Activated B cell treated with CpG ODN at 0.5 μM for 24 hours (primary cell): ENCODE measurements at regions of chrX and their contacts with region 1.

Region 1: GRCh38 chrX:114075073-114075673 is 508.7 kb upstream of the HTR2C start:
- DNase-seq: no peak
- ATAC-seq: no peak
- H3K4me3 Mint-ChIP-seq: no peak overlapping the region
- H3K27ac Mint-ChIP-seq: no peak overlapping the region
- H3K4me1 Mint-ChIP-seq: peaks cover 11% of the 10 kb centered on the region
- H3K27me3 Mint-ChIP-seq: no peaks in the 10 kb centered on the region
- CTCF ChIP-seq: no peak

Region 2: DNA sequence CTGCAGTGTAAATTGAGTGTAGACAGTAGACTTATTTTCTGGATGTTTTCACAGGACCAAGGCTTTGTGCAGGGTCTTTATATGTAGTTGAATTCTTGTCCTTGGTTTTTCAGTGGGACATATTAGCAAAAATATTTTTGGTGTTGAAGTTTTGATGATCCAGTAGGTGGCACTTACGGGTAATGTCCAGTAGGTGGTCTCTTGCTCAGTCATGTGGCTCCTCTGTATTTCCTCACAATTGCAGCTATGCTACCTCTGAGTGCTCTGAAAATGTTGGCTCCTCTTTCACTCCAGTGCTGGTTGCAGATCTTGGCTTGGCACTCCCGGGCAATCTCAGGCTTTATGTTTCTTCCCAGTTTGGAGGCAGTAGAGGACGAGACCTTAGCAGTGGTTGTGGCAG is 814.7 kb before region 1 on chrX:
- CTCF ChIA-PET with region 1: no interaction called
- POLR2A ChIA-PET with region 1: no interaction called
- intact Hi-C with region 1: loop called (anchors 10 kb)
- DNase-seq: no peak
- ATAC-seq: no peak
- H3K4me3 Mint-ChIP-seq: no peak overlapping the region
- H3K27ac Mint-ChIP-seq: no peak overlapping the region
- H3K4me1 Mint-ChIP-seq: peaks cover 3% of the 10 kb centered on the region
- H3K27me3 Mint-ChIP-seq: no peaks in the 10 kb centered on the region
- CTCF ChIP-seq: no peak

Region 3: DNA sequence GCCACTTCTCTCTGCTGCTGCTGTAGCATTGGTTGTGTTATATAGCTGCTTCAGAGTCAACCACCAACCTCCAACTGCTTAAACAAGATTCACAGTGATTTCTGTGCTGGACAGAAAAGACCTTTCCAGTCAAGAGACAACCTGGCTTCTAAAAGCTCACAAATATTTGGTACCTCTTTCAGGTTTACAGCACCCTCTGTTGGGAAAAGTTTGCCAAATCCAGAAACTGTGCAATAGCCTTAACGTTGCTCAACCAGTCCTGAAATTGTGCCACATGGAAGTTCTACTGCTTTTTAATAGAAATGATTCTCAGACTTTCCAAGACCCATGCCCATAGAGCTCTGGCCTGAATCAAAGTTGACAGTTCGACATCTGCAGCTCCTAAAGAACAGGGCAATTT is 333.4 kb before region 1 on chrX:
- CTCF ChIA-PET with region 1: interaction called, 3 read pairs
- POLR2A ChIA-PET with region 1: no interaction called
- intact Hi-C with region 1: loop called (anchors 5 kb)
- DNase-seq: no peak
- ATAC-seq: no peak
- H3K4me3 Mint-ChIP-seq: no peak overlapping the region
- H3K27ac Mint-ChIP-seq: peak overlapping the region; percentile 61
- H3K4me1 Mint-ChIP-seq: peaks cover 53% of the 10 kb centered on the region
- H3K27me3 Mint-ChIP-seq: no peaks in the 10 kb centered on the region
- CTCF ChIP-seq: no peak

Region 4: GRCh38 chrX:113929004-113929403 is 146.2 kb before region 1 on chrX:
- CTCF ChIA-PET with region 1: no interaction called
- POLR2A ChIA-PET with region 1: no interaction called
- intact Hi-C with region 1: loop called (anchors 1 kb)
- DNase-seq: no peak
- ATAC-seq: no peak
- H3K4me3 Mint-ChIP-seq: no peak overlapping the region
- H3K27ac Mint-ChIP-seq: no peak overlapping the region
- H3K4me1 Mint-ChIP-seq: no peaks in the 10 kb centered on the region
- H3K27me3 Mint-ChIP-seq: no peaks in the 10 kb centered on the region
- CTCF ChIP-seq: no peak

Region 5: DNA sequence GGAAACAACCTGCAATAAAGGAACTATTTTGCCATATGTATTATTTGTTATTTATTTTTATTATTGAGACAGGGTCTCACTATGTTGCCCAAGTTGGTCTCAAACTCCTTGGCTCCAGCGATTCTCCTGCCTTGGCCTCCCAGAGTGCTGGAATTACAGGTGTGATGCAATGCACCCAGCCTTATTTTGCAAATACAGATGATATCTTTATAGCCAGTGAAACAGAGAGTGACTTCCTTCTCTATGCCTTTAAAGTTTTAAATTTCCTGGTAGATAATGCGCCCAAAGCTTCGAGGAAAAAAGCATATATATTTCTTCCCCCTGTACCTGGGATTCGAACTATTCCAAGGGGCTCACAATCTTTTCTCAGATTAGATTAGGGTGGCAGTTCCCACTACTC is 92.4 kb before region 1 on chrX:
- CTCF ChIA-PET with region 1: no interaction called
- POLR2A ChIA-PET with region 1: no interaction called
- intact Hi-C with region 1: no loop called
- DNase-seq: no peak
- ATAC-seq: no peak
- H3K4me3 Mint-ChIP-seq: no peak overlapping the region
- H3K27ac Mint-ChIP-seq: no peak overlapping the region
- H3K4me1 Mint-ChIP-seq: peaks cover 13% of the 10 kb centered on the region
- H3K27me3 Mint-ChIP-seq: no peaks in the 10 kb centered on the region
- CTCF ChIP-seq: no peak

Region 6: DNA sequence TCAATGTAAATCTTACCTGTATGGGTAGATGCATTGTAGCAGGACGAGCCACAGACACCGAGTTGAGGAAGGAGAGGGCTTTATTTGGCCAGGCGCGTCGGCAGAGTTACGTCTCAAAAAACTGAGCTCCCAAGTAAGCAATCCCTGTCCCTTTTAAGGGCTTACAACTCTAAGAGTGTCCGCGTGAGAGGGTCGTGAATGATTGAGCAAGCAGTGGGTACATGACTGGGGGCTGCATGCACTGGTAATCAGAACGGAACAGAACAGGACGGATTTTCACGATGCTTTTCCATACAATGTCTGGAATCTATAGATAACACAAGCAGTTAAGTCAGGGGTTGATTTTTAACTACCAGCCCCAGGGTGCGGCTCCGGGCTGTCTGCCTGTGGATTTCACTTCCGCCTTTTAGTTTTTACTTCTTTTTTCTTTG is 16.2 kb before region 1 on chrX:
- CTCF ChIA-PET with region 1: no interaction called
- POLR2A ChIA-PET with region 1: no interaction called
- intact Hi-C with region 1: no loop called
- DNase-seq: no peak
- ATAC-seq: no peak
- H3K4me3 Mint-ChIP-seq: peak overlapping the region; percentile 70
- H3K27ac Mint-ChIP-seq: peak overlapping the region; percentile 61
- H3K4me1 Mint-ChIP-seq: peaks cover 9% of the 10 kb centered on the region
- H3K27me3 Mint-ChIP-seq: no peaks in the 10 kb centered on the region
- CTCF ChIP-seq: no peak